ENCODE measurements at regions of chr7 and their contacts with region 1.

Region 1: GRCh38 chr7:44123190-44124003 is at the start of gene POLD2:
- DNase-seq: peak; percentile 88 to 99
- H3K4me3 ChIP-seq: peak within 1 kb of the TSS; percentile 70 to 83
- H3K27ac ChIP-seq: peak within 1 kb of the TSS; percentile 80 to 91
- H3K4me1 ChIP-seq: peaks cover 6 to 14% of the 10 kb centered on the region in 2 donors
- H3K27me3 ChIP-seq: no peaks in the 10 kb centered on the region
- CTCF ChIP-seq: no peak
- total RNA-seq, gene POLD2: 97.0 TPM

Region 2: GRCh38 chr7:44059219-44060090 is 63.9 kb before region 1 on chr7:
- intact Hi-C with region 1: no loop called
- DNase-seq: peak in 1 of 2 donors; percentile 67
- H3K4me3 ChIP-seq: no peak overlapping the region
- H3K27ac ChIP-seq: no peak overlapping the region
- H3K4me1 ChIP-seq: peaks cover 0 to 1% of the 10 kb centered on the region in 2 donors
- H3K27me3 ChIP-seq: no peaks in the 10 kb centered on the region
- CTCF ChIP-seq: no peak

Region 3: GRCh38 chr7:44072364-44073231 is 50.8 kb before region 1 on chr7:
- intact Hi-C with region 1: loop called (anchors 2 kb)
- DNase-seq: peak; percentile 64 to 96
- H3K4me3 ChIP-seq: peak overlapping the region in 1 of 2 donors; percentile 34
- H3K27ac ChIP-seq: peak overlapping the region; percentile 70 to 71
- H3K4me1 ChIP-seq: peaks cover 21 to 24% of the 10 kb centered on the region in 2 donors
- H3K27me3 ChIP-seq: no peaks in the 10 kb centered on the region
- CTCF ChIP-seq: peak; percentile 57 to 81 (median 74)

Region 4: GRCh38 chr7:44082541-44083207 is 40.7 kb before region 1 on chr7:
- intact Hi-C with region 1: loop called (anchors 1 kb)
- DNase-seq: peak; percentile 98 to 100
- H3K4me3 ChIP-seq: peak overlapping the region; percentile 66 to 84
- H3K27ac ChIP-seq: peak overlapping the region; percentile 91 to 100
- H3K4me1 ChIP-seq: peaks cover 18 to 56% of the 10 kb centered on the region in 2 donors
- H3K27me3 ChIP-seq: no peaks in the 10 kb centered on the region
- CTCF ChIP-seq: no peak

Region 5: DNA sequence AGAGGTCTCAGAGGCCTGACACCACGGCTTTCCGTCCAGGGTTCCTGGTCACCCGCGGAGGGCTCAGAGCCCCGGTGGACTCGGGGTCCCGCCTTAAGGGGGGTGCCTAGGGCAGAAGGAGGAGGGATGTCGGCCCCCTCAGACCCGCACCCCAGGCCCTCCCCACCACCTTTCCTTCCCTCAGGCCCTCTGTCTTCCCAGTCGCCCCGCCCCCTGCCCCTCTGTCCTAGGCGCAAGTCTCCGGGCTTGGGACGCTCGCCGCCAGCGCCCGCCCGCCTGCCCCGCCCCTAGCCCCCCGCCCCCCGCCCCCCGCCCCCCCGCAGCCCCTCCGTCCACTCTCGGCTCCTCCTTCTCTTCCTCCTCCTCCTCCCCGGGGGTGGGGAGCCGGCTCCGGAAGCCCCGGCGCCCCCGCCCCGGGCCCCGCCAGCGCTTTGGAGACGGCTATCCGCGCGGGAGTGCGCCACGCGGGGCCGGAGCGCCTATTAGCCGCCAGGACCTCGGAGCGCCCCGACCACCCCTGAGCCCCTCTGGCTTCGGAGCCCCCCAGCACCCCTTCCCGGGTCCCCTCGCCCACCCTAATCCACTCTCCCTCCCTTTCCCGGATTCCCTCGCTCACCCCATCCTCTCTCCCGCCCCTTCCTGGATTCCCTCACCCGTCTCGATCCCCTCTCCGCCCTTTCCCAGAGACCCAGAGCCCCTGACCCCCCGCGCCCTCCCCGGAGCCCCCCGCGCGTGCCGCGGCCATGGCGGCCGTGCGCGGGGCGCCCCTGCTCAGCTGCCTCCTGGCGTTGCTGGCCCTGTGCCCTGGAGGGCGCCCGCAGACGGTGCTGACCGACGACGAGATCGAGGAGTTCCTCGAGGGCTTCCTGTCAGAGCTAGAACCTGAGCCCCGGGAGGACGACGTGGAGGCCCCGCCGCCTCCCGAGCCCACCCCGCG is 19.2 kb before region 1 on chr7 and contains the start of gene AEBP1:
- intact Hi-C with region 1: loop called (anchors 1 kb)
- DNase-seq: no peak
- H3K4me3 ChIP-seq: peak within 1 kb of the TSS; percentile 63 to 88
- H3K27ac ChIP-seq: peak within 1 kb of the TSS; percentile 99 to 100
- H3K4me1 ChIP-seq: peaks cover 58 to 78% of the 10 kb centered on the region in 2 donors
- H3K27me3 ChIP-seq: no peaks in the 10 kb centered on the region
- CTCF ChIP-seq: no peak
- total RNA-seq, gene AEBP1: 1,349 TPM

Region 6: GRCh38 chr7:44145969-44146911 is 22.8 kb after region 1 on chr7:
- intact Hi-C with region 1: loop called (anchors 1 kb)
- DNase-seq: peak in 1 of 2 donors; percentile 88
- H3K4me3 ChIP-seq: peak overlapping the region; percentile 56 to 67
- H3K27ac ChIP-seq: no peak overlapping the region
- H3K4me1 ChIP-seq: peaks cover 0 to 8% of the 10 kb centered on the region in 2 donors
- H3K27me3 ChIP-seq: no peaks in the 10 kb centered on the region
- CTCF ChIP-seq: no peak

Region 7: DNA sequence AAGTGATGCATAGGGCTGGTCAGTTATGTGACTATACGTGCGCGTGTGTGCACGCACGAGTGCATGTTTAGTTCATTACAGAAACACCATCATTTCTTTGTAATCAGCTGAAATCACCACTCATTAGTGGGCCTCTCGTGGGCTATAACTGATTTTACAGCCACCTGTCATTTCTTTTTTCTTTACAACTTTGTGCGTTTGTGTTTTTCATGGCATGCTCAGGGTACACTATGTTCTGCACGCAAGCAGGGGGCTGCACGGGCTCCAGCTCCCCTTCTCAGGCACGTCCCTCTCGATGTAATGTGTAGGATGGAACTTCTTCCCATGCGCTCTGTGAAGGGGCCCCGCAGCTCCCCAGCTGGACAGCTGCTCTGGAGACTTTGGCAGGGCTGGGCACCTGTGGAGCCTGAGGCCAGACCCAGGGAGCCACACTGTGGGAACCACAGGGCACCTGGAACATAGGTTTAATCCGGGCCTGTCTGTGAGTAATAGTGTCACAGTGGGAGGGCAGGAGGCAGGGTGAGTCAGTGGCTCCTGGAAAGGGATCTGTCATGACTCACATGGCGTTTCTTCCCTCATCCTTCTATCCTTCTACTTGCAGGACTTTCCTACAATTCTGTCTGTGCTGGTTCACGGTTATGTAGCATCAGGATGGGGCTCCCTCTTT is 60.9 kb after region 1 on chr7:
- intact Hi-C with region 1: no loop called
- DNase-seq: peak in 1 of 2 donors; percentile 33
- H3K4me3 ChIP-seq: no peak overlapping the region
- H3K27ac ChIP-seq: no peak overlapping the region
- H3K4me1 ChIP-seq: no peaks in the 10 kb centered on the region
- H3K27me3 ChIP-seq: no peaks in the 10 kb centered on the region
- CTCF ChIP-seq: no peak

Region 8: GRCh38 chr7:44200647-44201461 is 77.5 kb after region 1 on chr7 and contains the start of gene YKT6:
- intact Hi-C with region 1: loop called (anchors 5 kb)
- DNase-seq: peak; percentile 77 to 97
- H3K4me3 ChIP-seq: peak within 1 kb of the TSS; percentile 67 to 88
- H3K27ac ChIP-seq: peak within 1 kb of the TSS; percentile 73 to 74
- H3K4me1 ChIP-seq: no peaks in the 10 kb centered on the region
- H3K27me3 ChIP-seq: no peaks in the 10 kb centered on the region
- CTCF ChIP-seq: peak; percentile 45 to 81 (median 73)
- total RNA-seq, gene YKT6: 40.1 TPM

Region 9: GRCh38 chr7:44225566-44226395 is 102.4 kb after region 1 on chr7:
- intact Hi-C with region 1: no loop called
- DNase-seq: peak in 1 of 2 donors; percentile 54
- H3K4me3 ChIP-seq: no peak overlapping the region
- H3K27ac ChIP-seq: no peak overlapping the region
- H3K4me1 ChIP-seq: no peaks in the 10 kb centered on the region
- H3K27me3 ChIP-seq: no peaks in the 10 kb centered on the region
- CTCF ChIP-seq: no peak

Region 10: DNA sequence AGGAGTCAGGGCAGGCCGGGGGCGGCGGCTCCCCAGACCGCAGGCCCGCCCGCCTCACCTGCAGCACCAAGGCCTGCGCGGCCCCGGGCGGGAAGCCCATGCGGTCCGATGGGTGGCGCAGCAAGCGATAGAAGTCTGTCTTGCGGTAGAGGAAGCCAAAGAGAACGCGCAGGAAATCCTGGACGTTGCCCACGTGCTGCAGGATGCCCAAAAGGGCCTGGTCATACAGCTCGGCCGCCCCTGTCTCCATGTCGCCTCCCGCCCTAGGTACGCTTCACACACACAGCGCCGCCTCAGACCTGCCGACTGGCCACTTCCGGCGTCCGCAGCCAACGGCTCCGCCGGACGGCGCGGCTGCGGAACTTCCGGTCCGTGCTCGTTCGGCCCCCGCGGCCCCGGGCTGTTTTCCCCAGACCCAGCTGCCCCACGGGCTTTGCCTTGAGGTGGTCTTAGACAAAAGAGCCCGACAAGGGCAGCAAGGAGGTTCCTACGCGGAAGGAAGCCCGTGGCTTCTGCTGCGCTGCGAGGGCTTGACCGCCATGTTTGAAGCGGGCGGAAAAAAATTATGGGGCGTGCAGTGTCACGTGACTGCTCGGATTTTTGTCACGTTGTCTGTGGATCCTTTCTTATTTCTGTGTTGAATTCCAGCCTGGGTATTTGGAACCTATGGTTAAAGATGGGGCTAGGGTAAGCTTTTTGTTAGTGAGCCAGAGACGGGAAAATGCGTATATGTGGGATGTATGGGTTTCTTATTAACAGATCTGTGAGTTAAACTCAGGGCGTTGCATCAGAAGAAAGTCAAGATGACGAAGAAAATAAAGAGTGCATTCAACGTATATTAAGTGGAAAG is 367.2 kb after region 1 on chr7 and contains the start of gene NUDCD3:
- intact Hi-C with region 1: loop called (anchors 10 kb)
- DNase-seq: peak; percentile 28 to 89
- H3K4me3 ChIP-seq: peak within 1 kb of the TSS; percentile 89 to 95
- H3K27ac ChIP-seq: peak within 1 kb of the TSS; percentile 97
- H3K4me1 ChIP-seq: peaks cover 4 to 25% of the 10 kb centered on the region in 2 donors
- H3K27me3 ChIP-seq: no peaks in the 10 kb centered on the region
- CTCF ChIP-seq: peak in 2 of 3 experiments; percentile 17 to 30
- total RNA-seq, gene NUDCD3: 39.3 TPM